Calu3 (cell line): ENCODE measurements at regions of chr5 and their contacts with region 1.

Region 1: DNA sequence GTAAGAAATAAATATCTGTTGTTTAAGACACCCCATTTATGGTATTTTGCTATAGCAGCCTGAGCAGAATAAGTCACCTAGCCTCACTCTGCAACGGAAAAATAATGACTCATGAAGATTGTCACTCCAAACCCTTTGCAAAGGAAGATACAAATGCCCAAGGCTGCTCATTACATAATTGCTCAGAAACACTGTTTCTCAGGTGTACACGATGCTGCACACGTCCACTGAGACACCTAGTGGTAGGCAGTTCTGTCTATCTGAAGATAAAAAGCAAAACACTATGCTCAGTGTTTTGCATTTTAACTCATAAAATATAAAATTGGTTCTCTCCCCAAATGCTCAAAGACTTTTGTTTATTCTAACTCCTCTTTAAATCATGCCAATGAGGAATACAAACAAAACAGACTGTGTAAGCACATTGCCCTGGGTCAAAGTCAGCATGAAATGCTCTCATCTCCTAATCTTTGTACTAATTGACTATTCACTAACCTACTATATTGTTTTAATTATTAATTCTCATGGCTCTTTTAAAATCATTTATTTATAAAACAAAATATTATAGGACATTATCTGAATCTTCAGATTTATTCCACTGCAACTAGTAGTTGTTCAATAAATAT is 7.7 kb upstream of the TSLP start:
- DNase-seq: peak; percentile 34
- H3K4me3 Mint-ChIP-seq: no peak overlapping the region
- H3K27ac Mint-ChIP-seq: no peak overlapping the region
- H3K4me1 Mint-ChIP-seq: no peaks in the 10 kb centered on the region
- H3K27me3 Mint-ChIP-seq: peaks cover 36% of the 10 kb centered on the region
- CTCF ChIP-seq: peak; percentile 51

Region 2: DNA sequence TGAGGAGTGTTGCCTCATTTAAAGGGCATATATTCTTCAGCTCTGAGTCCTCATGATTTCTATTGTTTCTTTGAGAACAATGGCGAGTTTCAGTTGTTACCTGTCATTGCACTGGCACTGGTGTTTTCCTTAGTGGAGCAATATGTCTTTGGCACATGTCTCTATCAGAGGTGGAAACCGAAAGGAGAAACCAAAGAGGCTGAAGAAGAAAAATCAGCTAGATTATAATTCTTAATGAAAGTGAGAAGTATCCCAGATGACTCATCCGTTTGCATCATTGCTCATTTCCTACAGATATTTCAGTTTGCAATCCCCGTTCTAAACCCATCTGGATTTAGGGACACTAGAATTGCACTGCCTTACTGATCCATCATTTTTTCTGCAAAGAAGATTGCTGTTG is 661.9 kb before region 1 on chr5:
- CTCF ChIA-PET with region 1: no interaction called
- intact Hi-C with region 1: no loop called
- DNase-seq: no peak
- H3K4me3 Mint-ChIP-seq: no peak overlapping the region
- H3K27ac Mint-ChIP-seq: no peak overlapping the region
- H3K4me1 Mint-ChIP-seq: peaks cover 8% of the 10 kb centered on the region
- H3K27me3 Mint-ChIP-seq: no peaks in the 10 kb centered on the region
- CTCF ChIP-seq: no peak

Region 3: GRCh38 chr5:110790673-110791072 is 273.1 kb before region 1 on chr5:
- CTCF ChIA-PET with region 1: no interaction called
- intact Hi-C with region 1: loop called (anchors 1 kb)
- DNase-seq: no peak
- H3K4me3 Mint-ChIP-seq: no peak overlapping the region
- H3K27ac Mint-ChIP-seq: no peak overlapping the region
- H3K4me1 Mint-ChIP-seq: no peaks in the 10 kb centered on the region
- H3K27me3 Mint-ChIP-seq: no peaks in the 10 kb centered on the region
- CTCF ChIP-seq: no peak

Region 4: DNA sequence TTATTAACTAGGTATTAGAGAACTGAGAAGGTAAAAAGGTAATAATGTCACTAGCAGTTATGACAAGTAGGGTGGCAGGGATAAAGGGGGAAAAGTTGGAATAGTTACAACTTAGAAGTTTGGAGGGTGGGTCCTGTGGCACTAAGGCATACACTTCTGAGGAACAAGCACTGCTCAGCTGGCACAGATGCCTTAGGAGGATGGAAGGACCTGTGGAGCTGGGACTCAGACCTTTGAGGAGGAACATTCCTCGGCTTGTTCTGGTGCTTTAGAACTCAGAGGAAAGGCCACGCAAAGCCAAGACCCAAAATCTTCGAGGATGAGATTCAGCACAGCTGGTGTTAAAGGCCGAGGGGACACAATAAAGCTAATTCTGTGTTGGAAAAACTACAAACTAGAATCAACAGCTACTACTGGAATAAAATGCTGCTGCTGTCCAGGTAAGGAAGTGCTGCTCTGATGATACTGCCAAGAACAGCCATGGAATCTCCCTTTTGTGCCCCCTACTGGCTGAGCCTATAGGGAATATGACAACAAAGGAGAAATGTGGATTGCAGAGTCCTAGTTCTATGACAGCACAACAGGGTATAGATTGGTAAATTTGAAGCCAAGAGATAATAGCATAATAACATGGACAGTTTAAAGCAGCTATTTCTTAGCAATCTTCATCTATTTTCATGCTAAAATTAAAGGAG is 198.3 kb before region 1 on chr5:
- CTCF ChIA-PET with region 1: no interaction called
- intact Hi-C with region 1: loop called (anchors 2 kb)
- DNase-seq: peak; percentile 63
- H3K4me3 Mint-ChIP-seq: no peak overlapping the region
- H3K27ac Mint-ChIP-seq: no peak overlapping the region
- H3K4me1 Mint-ChIP-seq: no peaks in the 10 kb centered on the region
- H3K27me3 Mint-ChIP-seq: no peaks in the 10 kb centered on the region
- CTCF ChIP-seq: peak; percentile 64

Region 5: GRCh38 chr5:111158105-111158744 is 94.4 kb after region 1 on chr5:
- CTCF ChIA-PET with region 1: no interaction called
- intact Hi-C with region 1: no loop called
- DNase-seq: peak; percentile 83
- H3K4me3 Mint-ChIP-seq: no peak overlapping the region
- H3K27ac Mint-ChIP-seq: no peak overlapping the region
- H3K4me1 Mint-ChIP-seq: peaks cover 7% of the 10 kb centered on the region
- H3K27me3 Mint-ChIP-seq: no peaks in the 10 kb centered on the region
- CTCF ChIP-seq: peak; percentile 98